Transverse colon (tissue), 4 donors: ENCODE measurements at regions of chr2 and their contacts with region 1.

Region 1: DNA sequence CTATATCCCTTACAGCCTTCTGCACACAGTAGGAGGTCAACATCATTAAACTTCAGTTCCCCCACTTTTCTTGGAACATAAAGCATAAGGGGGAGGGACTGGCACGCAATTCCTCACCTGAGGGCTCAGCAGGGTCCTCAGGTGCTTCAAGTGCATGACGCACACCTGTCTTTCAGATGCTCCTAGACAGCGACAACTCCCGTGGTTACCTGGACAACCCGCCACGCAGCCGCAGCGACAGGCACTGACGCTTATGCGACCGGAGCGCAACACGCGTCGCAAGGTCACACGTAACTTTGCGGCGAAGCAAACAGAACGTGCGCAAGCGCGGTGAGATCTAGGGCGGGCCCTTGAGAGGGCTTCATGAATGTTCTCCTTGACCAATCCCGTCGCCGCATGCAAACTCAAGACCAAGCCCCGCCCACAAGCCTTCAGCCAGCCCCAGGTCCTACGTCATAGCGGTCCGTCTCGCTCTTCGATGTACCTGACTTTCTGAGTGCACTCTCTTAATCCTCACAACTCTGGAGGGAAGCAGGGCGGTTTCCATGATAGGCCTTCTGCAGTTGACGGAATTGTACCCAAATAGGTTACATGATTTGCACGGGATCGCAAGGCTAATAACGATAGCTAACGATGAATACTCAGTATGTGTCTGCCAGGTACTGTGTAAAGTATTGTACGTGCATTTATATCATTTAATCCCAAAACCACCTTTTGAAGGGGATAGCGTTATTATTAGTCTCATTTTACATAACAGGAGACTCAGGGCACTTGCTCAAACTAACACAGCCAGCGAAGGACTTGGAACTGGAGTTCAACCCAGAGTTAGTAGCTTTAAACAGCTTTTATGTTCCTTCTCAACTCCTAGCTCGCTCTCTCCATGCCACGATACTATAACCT is at the start of gene IFT172:
- DNase-seq: peak; percentile 100
- H3K4me3 ChIP-seq: peak within 1 kb of the TSS; percentile 41 to 56 (median 45)
- H3K27ac ChIP-seq: peak within 1 kb of the TSS; percentile 58 to 80 (median 74)
- H3K4me1 ChIP-seq: peaks cover 7 to 14% (median 12%) of the 10 kb centered on the region in 4 donors
- H3K27me3 ChIP-seq: peaks cover 12% of the 10 kb centered on the region
- CTCF ChIP-seq: no peak
- EP300 ChIP-seq: no peak
- POLR2A ChIP-seq: peak; percentile 80
- total RNA-seq, gene IFT172: 14.5 to 113 (median 43.5) TPM

Region 2: DNA sequence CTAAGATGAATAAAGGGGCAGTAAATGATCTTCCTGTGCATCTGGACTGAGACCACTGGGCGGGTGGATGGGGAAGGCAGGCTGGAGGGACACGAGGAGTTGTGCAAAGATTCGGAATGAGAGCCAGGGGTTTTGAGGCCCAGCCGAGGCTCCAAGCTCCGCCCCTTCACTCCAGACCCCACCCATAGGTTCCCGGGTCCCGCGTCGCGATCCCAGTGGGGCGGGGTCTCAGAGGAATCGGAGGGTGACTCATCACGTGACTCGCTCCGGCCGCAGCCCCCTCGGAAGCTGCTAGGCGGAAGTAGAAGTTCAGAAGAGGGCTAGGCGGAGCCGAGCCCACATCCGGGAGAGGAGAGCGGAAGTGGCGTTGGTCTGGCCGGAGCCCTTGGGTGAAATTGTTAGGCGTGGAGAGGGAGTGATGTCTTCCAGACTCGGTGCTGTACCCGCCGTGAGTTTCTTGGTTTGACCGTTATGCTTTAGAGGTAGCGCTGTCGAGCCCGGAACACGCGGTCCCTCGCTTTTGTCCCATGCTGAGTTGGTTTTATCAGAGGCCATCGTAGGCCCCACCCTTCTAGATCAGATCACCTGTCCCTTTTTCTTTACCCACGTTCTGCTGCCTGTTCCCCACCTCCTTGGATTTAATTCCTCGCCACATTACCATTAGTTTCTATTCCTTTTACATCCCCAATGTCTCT is 93.1 kb after region 1 on chr2 and contains the start of gene ZNF512:
- in situ Hi-C with region 1: no loop called
- intact Hi-C with region 1: loop called (anchors 5 kb)
- DNase-seq: peak; percentile 88
- H3K4me3 ChIP-seq: peak within 1 kb of the TSS; percentile 42 to 88 (median 54)
- H3K27ac ChIP-seq: peak within 1 kb of the TSS; percentile 53 to 86 (median 78)
- H3K4me1 ChIP-seq: peaks cover 11 to 33% (median 16%) of the 10 kb centered on the region in 4 donors
- H3K27me3 ChIP-seq: no peaks in the 10 kb centered on the region
- CTCF ChIP-seq: peak in 1 of 5 experiments; percentile 12
- EP300 ChIP-seq: no peak
- POLR2A ChIP-seq: peak; percentile 22
- total RNA-seq, gene ZNF512: 9.2 to 33.3 (median 20.2) TPM